ENCODE measurements at regions of chr5 and their contacts with region 1.

Region 1: DNA sequence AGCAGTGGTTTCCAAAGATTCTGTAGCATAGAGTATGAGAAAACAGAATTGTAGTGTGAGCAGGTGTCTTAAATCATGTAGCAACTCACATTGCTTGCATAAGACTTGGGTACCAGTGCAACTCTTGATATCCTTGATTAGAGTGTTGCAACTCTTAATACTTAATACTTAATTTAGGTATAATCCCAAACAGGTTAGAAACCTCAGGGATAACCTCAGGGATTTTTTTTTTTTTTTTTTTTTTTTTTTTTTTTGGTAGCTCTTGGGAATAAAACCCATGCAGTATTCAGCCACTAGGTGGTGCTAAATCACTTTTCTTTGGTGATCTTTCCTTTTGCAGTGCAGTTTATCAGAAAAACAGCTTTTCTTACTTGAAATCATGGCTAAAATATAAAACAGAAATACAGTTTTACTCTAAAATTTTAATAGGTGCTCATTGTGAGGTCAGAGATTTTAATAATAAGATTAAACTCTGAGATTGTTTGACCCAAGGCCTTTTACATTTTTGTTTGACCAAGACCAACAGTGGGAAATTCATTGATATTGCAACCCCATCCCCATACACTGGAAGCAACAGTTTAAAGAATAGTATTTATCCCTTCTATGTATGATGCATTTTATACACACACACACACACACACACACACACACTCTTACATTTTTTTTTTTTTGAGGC is 55.3 kb downstream of the ERAP1 start:
- DNase-seq: peak; percentile 44 to 66 (median 62)
- H3K4me3 ChIP-seq: no peak overlapping the region
- H3K4me3 Mint-ChIP-seq: no peak overlapping the region
- H3K27ac ChIP-seq: no peak overlapping the region
- H3K27ac Mint-ChIP-seq: peak overlapping the region in 3 of 7 donors; percentile 10 to 84 (median 50)
- H3K4me1 ChIP-seq: no peaks in the 10 kb centered on the region
- H3K4me1 Mint-ChIP-seq: peaks cover 0 to 3% (median under 1%) of the 10 kb centered on the region in 4 donors
- H3K27me3 ChIP-seq: no peaks in the 10 kb centered on the region
- H3K27me3 Mint-ChIP-seq: no peaks in the 10 kb centered on the region

Region 2: DNA sequence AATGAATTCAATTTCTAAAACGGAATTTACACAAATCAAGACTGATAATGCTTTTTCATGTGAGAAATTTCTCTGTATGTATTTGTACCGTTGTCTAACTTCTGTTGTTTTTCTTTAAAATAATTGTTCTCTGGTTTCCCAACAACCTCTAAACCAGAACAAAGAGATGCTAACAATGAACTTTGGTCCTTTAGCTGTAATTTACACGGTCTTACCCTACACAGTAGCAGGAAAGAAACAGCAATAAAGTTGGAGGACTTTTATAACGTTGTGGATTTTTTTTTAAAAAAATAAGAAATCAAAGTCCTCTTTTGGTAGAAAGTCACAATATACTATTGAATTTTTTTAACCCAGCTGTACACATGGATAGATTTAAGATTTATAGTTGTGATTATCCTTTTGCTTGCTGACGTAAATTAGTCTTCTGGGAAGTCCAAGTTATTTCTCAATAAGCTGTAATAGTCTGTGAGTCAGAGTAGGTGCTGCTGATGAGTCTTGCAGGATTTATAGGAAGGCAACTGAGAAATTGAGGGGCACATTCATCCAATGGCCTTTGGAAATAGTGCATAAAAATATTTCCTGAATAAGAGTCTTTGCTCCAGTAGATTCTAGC is 242.7 kb before region 1 on chr5:
- CTCF ChIA-PET with region 1: no interaction called
- POLR2A ChIA-PET with region 1: no interaction called
- intact Hi-C with region 1: no loop called
- DNase-seq: no peak
- H3K4me3 ChIP-seq: no peak overlapping the region
- H3K4me3 Mint-ChIP-seq: no peak overlapping the region
- H3K27ac ChIP-seq: no peak overlapping the region
- H3K27ac Mint-ChIP-seq: no peak overlapping the region
- H3K4me1 ChIP-seq: no peaks in the 10 kb centered on the region
- H3K4me1 Mint-ChIP-seq: no peaks in the 10 kb centered on the region
- H3K27me3 ChIP-seq: no peaks in the 10 kb centered on the region
- H3K27me3 Mint-ChIP-seq: peaks cover 0 to 3% of the 10 kb centered on the region in 2 donors

Region 3: DNA sequence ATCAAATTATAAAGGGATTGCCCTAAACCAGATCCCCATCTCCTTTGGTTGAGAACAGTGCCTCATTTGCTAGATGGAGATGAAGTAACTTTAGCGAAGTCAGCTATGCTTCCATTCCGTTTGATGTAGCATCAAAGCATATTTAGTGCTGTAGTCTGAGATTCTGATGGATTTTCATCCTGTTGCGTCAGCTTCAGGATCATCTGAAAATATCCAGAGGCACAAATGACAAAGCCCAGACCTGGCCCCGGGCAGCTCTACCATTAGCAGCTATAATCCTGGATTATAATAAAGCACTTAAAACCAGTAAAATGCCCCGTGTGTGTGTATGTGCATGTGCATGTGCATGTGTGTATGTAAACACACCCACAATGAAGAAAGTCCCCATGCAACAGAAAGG is 10.5 kb after region 1 on chr5:
- CTCF ChIA-PET with region 1: interaction called, 30 read pairs
- POLR2A ChIA-PET with region 1: no interaction called
- intact Hi-C with region 1: no loop called
- DNase-seq: no peak
- H3K4me3 ChIP-seq: no peak overlapping the region
- H3K4me3 Mint-ChIP-seq: no peak overlapping the region
- H3K27ac ChIP-seq: no peak overlapping the region
- H3K27ac Mint-ChIP-seq: peak overlapping the region in 4 of 7 donors; percentile 1 to 36 (median 14)
- H3K4me1 ChIP-seq: no peaks in the 10 kb centered on the region
- H3K4me1 Mint-ChIP-seq: peaks cover 0 to 6% (median 2%) of the 10 kb centered on the region in 4 donors
- H3K27me3 ChIP-seq: no peaks in the 10 kb centered on the region
- H3K27me3 Mint-ChIP-seq: no peaks in the 10 kb centered on the region

Region 4: DNA sequence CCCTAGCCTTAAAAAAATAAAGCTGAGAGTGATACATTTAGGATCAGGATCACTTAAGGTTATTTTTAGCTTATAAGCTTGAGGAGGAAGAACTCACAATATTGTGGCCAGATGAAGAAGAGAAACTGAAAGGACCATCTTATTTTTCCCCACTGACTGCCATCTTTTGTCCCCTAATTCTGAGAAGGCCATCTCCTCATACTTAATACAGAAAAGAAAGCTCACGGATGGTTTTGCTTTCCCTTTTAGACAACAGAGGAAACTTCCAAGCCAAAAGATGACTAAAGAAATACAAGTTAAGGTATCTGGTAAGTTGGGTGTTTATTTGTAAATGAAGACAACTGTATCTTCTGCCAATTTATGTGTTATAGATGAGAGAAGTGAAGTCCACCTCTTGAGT is 18.9 kb after region 1 on chr5:
- CTCF ChIA-PET with region 1: interaction called, 18 read pairs
- POLR2A ChIA-PET with region 1: no interaction called
- intact Hi-C with region 1: no loop called
- DNase-seq: no peak
- H3K4me3 ChIP-seq: no peak overlapping the region
- H3K4me3 Mint-ChIP-seq: peak overlapping the region in 1 of 8 donors; percentile 5
- H3K27ac ChIP-seq: no peak overlapping the region
- H3K27ac Mint-ChIP-seq: peak overlapping the region; percentile 57 to 86 (median 74)
- H3K4me1 ChIP-seq: peaks cover 10% of the 10 kb centered on the region
- H3K4me1 Mint-ChIP-seq: peaks cover 8 to 18% (median 15%) of the 10 kb centered on the region in 4 donors
- H3K27me3 ChIP-seq: no peaks in the 10 kb centered on the region
- H3K27me3 Mint-ChIP-seq: no peaks in the 10 kb centered on the region

Region 5: GRCh38 chr5:96823900-96824351 is 71.4 kb after region 1 on chr5:
- CTCF ChIA-PET with region 1: interaction called, 57 read pairs
- POLR2A ChIA-PET with region 1: no interaction called
- intact Hi-C with region 1: loop called (anchors 1 kb)
- DNase-seq: peak in 1 of 5 donors; percentile 35
- H3K4me3 ChIP-seq: no peak overlapping the region
- H3K4me3 Mint-ChIP-seq: peak overlapping the region in 1 of 8 donors; percentile 4
- H3K27ac ChIP-seq: no peak overlapping the region
- H3K27ac Mint-ChIP-seq: peak overlapping the region in 3 of 7 donors; percentile 14 to 83 (median 49)
- H3K4me1 ChIP-seq: peaks cover 28% of the 10 kb centered on the region
- H3K4me1 Mint-ChIP-seq: peaks cover 31 to 46% (median 38%) of the 10 kb centered on the region in 4 donors
- H3K27me3 ChIP-seq: no peaks in the 10 kb centered on the region
- H3K27me3 Mint-ChIP-seq: peaks cover 0 to 2% of the 10 kb centered on the region in 2 donors

Region 6: DNA sequence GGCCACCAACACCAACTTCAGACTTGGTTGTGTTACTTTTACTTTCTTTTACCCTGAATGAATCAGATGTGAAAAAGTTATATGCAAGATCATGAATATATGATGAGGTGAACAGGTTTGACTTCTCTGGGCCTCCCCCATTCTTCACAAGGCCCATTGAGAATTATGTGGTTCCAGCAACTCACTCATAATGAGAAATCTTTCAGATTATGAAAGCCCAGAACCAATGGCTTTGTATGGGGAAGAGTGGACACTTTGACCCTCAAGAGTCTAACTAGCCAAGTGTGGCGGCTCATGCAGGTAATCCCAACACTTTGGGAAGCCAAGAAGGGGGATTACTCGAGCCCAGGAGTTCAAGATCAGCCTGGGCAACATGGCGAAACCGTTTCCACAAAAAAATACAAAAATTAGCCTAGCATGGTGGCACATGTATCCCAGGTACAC is 167.3 kb after region 1 on chr5:
- CTCF ChIA-PET with region 1: interaction called, 13 read pairs
- POLR2A ChIA-PET with region 1: no interaction called
- intact Hi-C with region 1: no loop called
- DNase-seq: no peak
- H3K4me3 ChIP-seq: no peak overlapping the region
- H3K4me3 Mint-ChIP-seq: no peak overlapping the region
- H3K27ac ChIP-seq: no peak overlapping the region
- H3K27ac Mint-ChIP-seq: peak overlapping the region in 1 of 7 donors; percentile 83
- H3K4me1 ChIP-seq: peaks cover 9% of the 10 kb centered on the region
- H3K4me1 Mint-ChIP-seq: peaks cover 8 to 22% (median 10%) of the 10 kb centered on the region in 4 donors
- H3K27me3 ChIP-seq: no peaks in the 10 kb centered on the region
- H3K27me3 Mint-ChIP-seq: no peaks in the 10 kb centered on the region

Region 7: DNA sequence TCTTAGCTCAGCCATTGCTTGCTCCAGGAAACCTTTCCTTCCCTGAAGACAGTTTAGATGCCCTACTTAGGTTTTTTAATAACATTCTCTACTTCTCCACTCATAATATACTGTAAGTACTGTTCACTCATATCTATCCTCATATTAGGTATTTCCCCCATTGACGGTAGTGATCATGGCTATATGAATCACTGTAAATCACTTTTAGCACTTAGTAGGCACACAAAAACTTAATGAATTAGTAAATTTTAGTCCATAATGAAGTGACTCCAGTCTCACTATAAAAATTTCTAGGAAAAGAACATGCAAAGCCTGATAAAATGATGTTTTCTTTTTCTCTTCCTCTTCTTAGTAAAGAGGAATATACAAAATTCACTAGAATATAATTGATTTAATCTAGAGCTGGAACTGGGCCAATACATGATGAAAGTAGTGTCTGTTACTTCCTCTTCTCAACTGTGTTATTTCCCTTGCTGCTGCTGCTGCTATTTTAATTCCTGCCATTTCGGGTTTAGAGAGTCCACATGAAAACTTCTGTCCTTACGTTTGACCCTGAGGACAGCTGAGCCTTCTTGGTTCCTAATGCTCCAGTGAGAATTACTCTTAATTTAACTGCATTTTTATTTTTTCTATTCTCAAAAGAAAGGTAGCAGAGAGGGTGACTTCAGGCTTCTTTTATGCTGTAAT is 256.9 kb after region 1 on chr5:
- CTCF ChIA-PET with region 1: interaction called, 4 read pairs
- POLR2A ChIA-PET with region 1: no interaction called
- intact Hi-C with region 1: loop called (anchors 10 kb)
- DNase-seq: peak in 4 of 5 donors; percentile 31 to 47 (median 37)
- H3K4me3 ChIP-seq: no peak overlapping the region
- H3K4me3 Mint-ChIP-seq: peak overlapping the region in 5 of 8 donors; percentile 7 to 66 (median 51)
- H3K27ac ChIP-seq: no peak overlapping the region
- H3K27ac Mint-ChIP-seq: peak overlapping the region in 5 of 7 donors; percentile 23 to 87 (median 66)
- H3K4me1 ChIP-seq: peaks cover 24% of the 10 kb centered on the region
- H3K4me1 Mint-ChIP-seq: peaks cover 17 to 32% (median 26%) of the 10 kb centered on the region in 4 donors
- H3K27me3 ChIP-seq: no peaks in the 10 kb centered on the region
- H3K27me3 Mint-ChIP-seq: no peaks in the 10 kb centered on the region

Region 8: GRCh38 chr5:97418462-97418861 is 666.0 kb after region 1 on chr5:
- CTCF ChIA-PET with region 1: no interaction called
- POLR2A ChIA-PET with region 1: no interaction called
- intact Hi-C with region 1: no loop called
- DNase-seq: no peak
- H3K4me3 ChIP-seq: no peak overlapping the region
- H3K4me3 Mint-ChIP-seq: no peak overlapping the region
- H3K27ac ChIP-seq: no peak overlapping the region
- H3K27ac Mint-ChIP-seq: no peak overlapping the region
- H3K4me1 ChIP-seq: no peaks in the 10 kb centered on the region
- H3K4me1 Mint-ChIP-seq: no peaks in the 10 kb centered on the region
- H3K27me3 ChIP-seq: no peaks in the 10 kb centered on the region
- H3K27me3 Mint-ChIP-seq: no peaks in the 10 kb centered on the region